Activated CD4-positive, alpha-beta T cell treated with anti-CD3 and anti-CD28 coated beads for 36 hours (primary cell): ENCODE measurements at regions of chr4 and their contacts with region 1.

Region 1: DNA sequence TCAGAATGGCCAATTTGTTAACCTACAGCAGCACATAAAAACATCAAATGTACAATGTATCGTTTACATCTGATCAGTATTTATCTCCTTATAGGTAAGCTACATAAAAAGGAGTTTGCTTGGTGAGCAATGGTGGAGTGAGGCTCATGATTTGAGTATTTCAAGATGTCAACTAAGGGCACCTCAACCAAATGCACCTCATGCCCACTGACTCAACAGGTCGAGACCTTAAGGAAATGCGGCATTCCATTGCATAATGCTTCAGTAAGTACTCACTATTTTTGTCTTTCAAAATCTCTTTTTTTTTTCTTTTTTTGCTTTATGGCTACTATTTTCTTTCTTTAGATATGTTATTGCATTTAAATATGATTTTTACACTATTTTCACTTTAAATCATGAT is 181.0 kb upstream of the TLL1 start:
- DNase-seq: no peak
- ATAC-seq: no peak
- H3K4me3 Mint-ChIP-seq: no peak overlapping the region
- H3K27ac Mint-ChIP-seq: no peak overlapping the region
- H3K4me1 Mint-ChIP-seq: no peaks in the 10 kb centered on the region
- H3K27me3 Mint-ChIP-seq: no peaks in the 10 kb centered on the region

Region 2: DNA sequence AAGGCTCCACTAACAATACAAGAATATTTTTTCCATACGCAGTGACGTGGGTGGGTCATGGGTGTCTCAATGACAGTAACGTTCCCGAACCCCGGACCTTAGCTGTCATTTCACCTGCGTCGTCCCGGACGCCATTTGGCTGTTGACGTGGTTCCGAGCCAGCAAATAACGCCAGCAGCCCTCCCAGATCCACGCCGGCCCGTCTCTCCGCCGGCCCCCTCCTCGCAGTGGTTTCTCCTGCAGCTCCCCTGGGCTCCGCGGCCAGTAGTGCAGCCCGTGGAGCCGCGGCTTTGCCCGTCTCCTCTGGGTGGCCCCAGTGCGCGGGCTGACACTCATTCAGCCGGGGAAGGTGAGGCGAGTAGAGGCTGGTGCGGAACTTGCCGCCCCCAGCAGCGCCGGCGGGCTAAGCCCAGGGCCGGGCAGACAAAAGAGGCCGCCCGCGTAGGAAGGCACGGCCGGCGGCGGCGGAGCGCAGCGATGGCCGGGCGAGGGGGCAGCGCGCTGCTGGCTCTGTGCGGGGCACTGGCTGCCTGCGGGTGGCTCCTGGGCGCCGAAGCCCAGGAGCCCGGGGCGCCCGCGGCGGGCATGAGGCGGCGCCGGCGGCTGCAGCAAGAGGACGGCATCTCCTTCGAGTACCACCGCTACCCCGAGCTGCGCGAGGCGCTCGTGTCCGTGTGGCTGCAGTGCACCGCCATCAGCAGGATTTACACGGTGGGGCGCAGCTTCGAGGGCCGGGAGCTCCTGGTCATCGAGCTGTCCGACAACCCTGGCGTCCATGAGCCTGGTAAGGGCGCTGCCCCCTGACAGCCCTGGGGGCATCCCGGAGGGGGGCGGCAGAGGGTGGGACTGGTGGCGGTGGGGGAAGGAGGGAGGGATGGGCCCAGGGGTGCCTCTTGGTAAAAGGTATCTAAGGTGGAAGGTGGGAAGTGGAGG is 313.1 kb before region 1 on chr4 and contains the start of gene CPE:
- CTCF ChIA-PET with region 1: no interaction called
- POLR2A ChIA-PET with region 1: no interaction called
- intact Hi-C with region 1: no loop called
- DNase-seq: peak; percentile 82
- ATAC-seq: peak; percentile 100
- H3K4me3 Mint-ChIP-seq: peak within 1 kb of the TSS; percentile 60
- H3K27ac Mint-ChIP-seq: no peak within 1 kb of the TSS
- H3K4me1 Mint-ChIP-seq: no peaks in the 10 kb centered on the region
- H3K27me3 Mint-ChIP-seq: peaks cover 53% of the 10 kb centered on the region
- total RNA-seq, gene CPE: not detected

Region 3: GRCh38 chr4:165584916-165585315 is 107.2 kb before region 1 on chr4:
- CTCF ChIA-PET with region 1: no interaction called
- POLR2A ChIA-PET with region 1: interaction called, 18 read pairs
- intact Hi-C with region 1: no loop called
- DNase-seq: no peak
- ATAC-seq: no peak
- H3K4me3 Mint-ChIP-seq: no peak overlapping the region
- H3K27ac Mint-ChIP-seq: no peak overlapping the region
- H3K4me1 Mint-ChIP-seq: no peaks in the 10 kb centered on the region
- H3K27me3 Mint-ChIP-seq: no peaks in the 10 kb centered on the region